ENCODE measurements at regions of chr14 and their contacts with region 1.

Region 1: GRCh38 chr14:45134051-45134958 is at the start of gene FKBP3:
- DNase-seq: peak; percentile 97
- H3K4me3 ChIP-seq: peak within 1 kb of the TSS; percentile 70 to 86 (median 74)
- H3K27ac ChIP-seq: peak within 1 kb of the TSS; percentile 83 to 90 (median 86)
- H3K4me1 ChIP-seq: peaks cover 18 to 48% (median 42%) of the 10 kb centered on the region in 4 donors
- H3K27me3 ChIP-seq: no peaks in the 10 kb centered on the region
- CTCF ChIP-seq: peak in 1 of 3 experiments; percentile 10
- EP300 ChIP-seq: no peak
- POLR2A ChIP-seq: peak; percentile 58
- total RNA-seq, gene FKBP3: 28.5 to 68.1 (median 31.3) TPM

Region 2: DNA sequence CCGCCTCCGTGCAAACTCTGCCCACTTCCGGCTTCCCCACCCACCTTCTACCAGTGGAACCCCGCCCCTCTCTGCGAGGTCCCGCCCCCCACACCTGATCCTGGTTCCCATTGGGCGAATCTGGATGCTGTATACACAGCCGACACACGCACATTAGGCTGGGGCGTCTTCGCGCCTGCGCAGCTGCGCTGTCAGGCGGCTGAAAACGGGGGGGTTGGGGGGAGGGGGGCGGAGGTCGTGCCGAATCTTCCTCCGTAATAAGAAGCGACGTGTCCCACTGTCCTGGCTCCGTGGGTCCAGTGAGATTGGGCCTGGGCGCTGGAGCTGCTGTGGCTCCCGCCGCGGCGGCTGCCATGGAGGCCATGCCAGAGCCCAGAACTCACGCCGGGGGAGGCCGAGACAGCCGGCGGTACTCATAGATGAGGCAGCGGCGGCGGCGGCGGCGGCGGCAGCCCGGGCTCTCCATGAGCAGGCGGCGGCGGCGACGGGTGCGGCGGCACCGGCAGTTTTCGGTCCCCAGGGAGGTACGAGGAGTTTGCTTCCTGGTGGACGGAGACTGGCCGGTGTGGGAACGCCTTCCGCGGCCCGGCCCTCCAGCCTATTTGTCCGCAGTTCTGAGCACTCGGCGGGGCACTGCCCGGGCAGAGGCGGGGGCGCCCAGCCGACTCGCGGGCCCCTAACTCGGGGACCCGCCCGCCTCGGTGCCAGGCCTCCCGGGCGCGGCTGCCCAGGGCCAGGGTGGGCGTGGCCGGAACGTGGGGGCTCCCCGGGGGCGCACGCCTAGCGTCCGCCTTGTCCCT is 237.1 kb before region 1 on chr14:
- intact Hi-C with region 1: loop called (anchors 5 kb)
- DNase-seq: peak; percentile 100
- H3K4me3 ChIP-seq: peak overlapping the region; percentile 83 to 94 (median 90)
- H3K27ac ChIP-seq: peak overlapping the region; percentile 97 to 100 (median 100)
- H3K4me1 ChIP-seq: peaks cover 20 to 56% (median 46%) of the 10 kb centered on the region in 4 donors
- H3K27me3 ChIP-seq: no peaks in the 10 kb centered on the region
- CTCF ChIP-seq: no peak
- EP300 ChIP-seq: no peak
- POLR2A ChIP-seq: peak; percentile 43

Region 3: DNA sequence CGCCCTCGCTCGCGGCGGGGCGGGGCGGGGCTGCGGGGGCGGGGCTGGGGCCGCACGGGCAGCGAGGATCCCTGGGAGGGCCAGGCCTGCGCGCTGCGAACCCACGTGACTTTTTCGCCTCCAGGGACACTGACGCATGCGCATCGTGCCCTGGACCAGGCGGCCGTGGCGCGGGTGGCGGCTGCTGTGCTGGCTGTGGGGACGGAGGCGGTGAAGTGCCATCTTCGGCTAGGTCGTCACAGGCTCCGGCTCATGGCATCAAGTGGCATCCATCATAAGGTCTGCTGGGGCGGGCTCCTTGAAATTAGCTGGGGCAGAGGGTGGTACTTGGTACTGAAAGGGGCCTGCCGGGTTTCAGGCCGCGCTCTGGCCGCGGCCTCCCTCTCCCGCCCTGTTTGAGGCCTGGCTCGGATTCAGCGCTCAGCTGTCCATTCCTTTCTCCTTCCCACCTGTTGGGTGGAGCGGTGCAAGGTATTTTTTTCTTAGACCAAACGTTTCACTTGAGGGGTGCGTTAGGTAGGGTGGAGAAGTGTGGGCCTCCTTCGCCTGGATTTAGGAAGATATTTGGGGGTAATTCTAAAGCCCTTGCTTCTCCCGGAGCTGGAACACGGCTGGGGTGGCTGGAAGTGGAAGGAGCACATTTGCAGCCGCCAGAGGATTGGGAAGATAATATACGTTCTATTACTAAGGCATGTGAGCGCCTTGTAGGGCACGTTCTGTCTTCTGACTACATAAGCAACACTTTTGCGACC is 50.2 kb before region 1 on chr14 and contains the start of gene PRPF39:
- intact Hi-C with region 1: loop called (anchors 5 kb)
- DNase-seq: peak; percentile 97
- H3K4me3 ChIP-seq: peak within 1 kb of the TSS; percentile 59 to 74 (median 68)
- H3K27ac ChIP-seq: peak within 1 kb of the TSS; percentile 81 to 85 (median 83)
- H3K4me1 ChIP-seq: peaks cover 17 to 52% (median 47%) of the 10 kb centered on the region in 4 donors
- H3K27me3 ChIP-seq: no peaks in the 10 kb centered on the region
- CTCF ChIP-seq: no peak
- EP300 ChIP-seq: no peak
- POLR2A ChIP-seq: peak; percentile 80
- total RNA-seq, gene PRPF39: 11.7 to 33.6 (median 16.8) TPM

Region 4: DNA sequence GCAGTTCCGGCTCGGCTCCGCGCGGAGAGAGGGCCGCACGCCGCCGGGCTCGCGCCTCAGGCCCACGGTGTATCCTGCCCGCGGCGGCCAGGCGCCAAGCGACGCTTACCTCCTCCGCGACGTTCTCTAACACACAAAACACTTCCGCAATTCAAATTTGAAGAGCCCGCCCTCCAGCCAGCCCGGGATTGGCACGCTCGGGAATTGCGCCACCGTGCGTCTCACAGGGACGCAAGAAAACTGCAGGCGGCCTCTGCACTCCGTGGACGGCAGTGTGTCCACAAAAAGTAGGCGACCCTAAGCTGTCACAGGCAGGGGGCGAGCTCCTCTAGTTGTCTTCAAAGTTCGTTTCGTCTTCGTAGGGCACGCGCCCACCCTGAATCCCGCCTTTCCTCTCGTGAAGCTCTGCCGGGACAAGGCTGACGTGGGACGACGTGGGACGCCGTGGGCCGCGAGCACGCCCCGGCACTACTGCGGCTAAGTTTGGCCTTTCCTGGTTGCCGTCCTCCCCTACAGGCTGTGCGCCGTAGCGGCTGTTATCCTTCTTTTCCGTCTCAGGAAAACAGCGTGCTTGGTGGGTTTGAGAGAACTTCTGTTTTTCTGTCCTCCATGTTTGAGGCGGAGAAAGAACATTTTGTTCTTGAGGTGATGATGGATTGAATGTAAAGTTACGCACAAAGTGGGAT is 118.9 kb after region 1 on chr14 and contains the start of gene MIS18BP1:
- intact Hi-C with region 1: loop called (anchors 5 kb)
- DNase-seq: peak; percentile 98
- H3K4me3 ChIP-seq: peak within 1 kb of the TSS; percentile 73 to 89 (median 78)
- H3K27ac ChIP-seq: peak within 1 kb of the TSS; percentile 86 to 93 (median 91)
- H3K4me1 ChIP-seq: peaks cover 18 to 43% (median 30%) of the 10 kb centered on the region in 4 donors
- H3K27me3 ChIP-seq: no peaks in the 10 kb centered on the region
- CTCF ChIP-seq: peak; percentile 60 to 77 (median 63)
- EP300 ChIP-seq: peak; percentile 23
- POLR2A ChIP-seq: peak; percentile 40
- total RNA-seq, gene MIS18BP1: 10.8 to 20.8 (median 12.7) TPM

Measured in esophagus muscularis mucosa (tissue), 4 donors.